CD4-positive, alpha-beta T cell (primary cell): ENCODE measurements at regions of chr3 and their contacts with region 1.

Region 1: GRCh38 chr3:152444029-152444641 is 175.4 kb downstream of the MBNL1 start:
- DNase-seq: peak in 3 of 14 experiments; percentile 62 to 68 (median 66)
- ATAC-seq: peak; percentile 57
- H3K4me3 ChIP-seq: no peak overlapping the region
- H3K4me3 Mint-ChIP-seq: peak overlapping the region; percentile 12
- H3K27ac ChIP-seq: peak overlapping the region in 1 of 2 donors; percentile 41
- H3K27ac Mint-ChIP-seq: peak overlapping the region; percentile 73
- H3K4me1 ChIP-seq: peaks cover 13% of the 10 kb centered on the region
- H3K4me1 Mint-ChIP-seq: peaks cover 79% of the 10 kb centered on the region
- H3K27me3 ChIP-seq: no peaks in the 10 kb centered on the region
- H3K27me3 Mint-ChIP-seq: no peaks in the 10 kb centered on the region
- CTCF ChIP-seq: peak; percentile 70

Region 2: GRCh38 chr3:152026033-152026556 is 418.0 kb before region 1 on chr3:
- CTCF ChIA-PET with region 1: interaction called, 4 read pairs
- POLR2A ChIA-PET with region 1: no interaction called
- intact Hi-C with region 1: loop called in 1 of 2 experiments (anchors 5 kb)
- DNase-seq: peak in 3 of 14 experiments; percentile 13 to 23 (median 22)
- ATAC-seq: no peak
- H3K4me3 ChIP-seq: no peak overlapping the region
- H3K4me3 Mint-ChIP-seq: no peak overlapping the region
- H3K27ac ChIP-seq: no peak overlapping the region
- H3K27ac Mint-ChIP-seq: no peak overlapping the region
- H3K4me1 ChIP-seq: no peaks in the 10 kb centered on the region
- H3K4me1 Mint-ChIP-seq: no peaks in the 10 kb centered on the region
- H3K27me3 ChIP-seq: no peaks in the 10 kb centered on the region
- H3K27me3 Mint-ChIP-seq: no peaks in the 10 kb centered on the region
- CTCF ChIP-seq: no peak

Region 3: GRCh38 chr3:152071924-152072323 is 372.2 kb before region 1 on chr3:
- CTCF ChIA-PET with region 1: interaction called, 3 read pairs
- POLR2A ChIA-PET with region 1: interaction called, 3 read pairs
- intact Hi-C with region 1: loop called in 1 of 2 experiments (anchors 1 kb)
- DNase-seq: peak in 4 of 14 experiments; percentile 2 to 65 (median 56)
- ATAC-seq: peak; percentile 86
- H3K4me3 ChIP-seq: no peak overlapping the region
- H3K4me3 Mint-ChIP-seq: no peak overlapping the region
- H3K27ac ChIP-seq: no peak overlapping the region
- H3K27ac Mint-ChIP-seq: no peak overlapping the region
- H3K4me1 ChIP-seq: no peaks in the 10 kb centered on the region
- H3K4me1 Mint-ChIP-seq: peaks cover 5% of the 10 kb centered on the region
- H3K27me3 ChIP-seq: no peaks in the 10 kb centered on the region
- H3K27me3 Mint-ChIP-seq: no peaks in the 10 kb centered on the region
- CTCF ChIP-seq: peak; percentile 45

Region 4: DNA sequence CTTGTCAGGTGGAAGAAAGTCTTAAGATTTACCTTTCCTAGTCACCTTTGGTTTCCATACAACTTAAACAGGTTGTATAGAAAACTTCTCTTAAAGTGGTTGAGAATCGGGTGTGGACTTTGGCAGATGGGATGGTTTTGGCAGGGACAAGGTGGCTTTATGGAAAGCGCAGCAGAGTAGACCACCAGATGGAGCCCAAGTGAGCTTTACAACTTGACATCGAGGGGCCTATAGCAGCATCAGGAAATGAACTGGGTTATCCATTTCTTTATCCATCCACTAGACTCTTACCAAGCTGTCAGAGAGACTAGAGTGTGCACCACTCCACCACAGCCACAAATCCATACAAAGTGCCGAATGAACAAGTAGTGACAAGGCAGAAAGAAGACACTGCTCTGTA is 260.7 kb before region 1 on chr3:
- CTCF ChIA-PET with region 1: interaction called, 17 read pairs
- POLR2A ChIA-PET with region 1: interaction called, 9 read pairs
- intact Hi-C with region 1: loop called (anchors 1 to 2 kb)
- DNase-seq: peak in 13 of 14 experiments; percentile 31 to 80 (median 39)
- ATAC-seq: peak; percentile 91
- H3K4me3 ChIP-seq: no peak overlapping the region
- H3K4me3 Mint-ChIP-seq: peak overlapping the region; percentile 45
- H3K27ac ChIP-seq: no peak overlapping the region
- H3K27ac Mint-ChIP-seq: peak overlapping the region; percentile 6
- H3K4me1 ChIP-seq: peaks cover 11% of the 10 kb centered on the region
- H3K4me1 Mint-ChIP-seq: peaks cover 63% of the 10 kb centered on the region
- H3K27me3 ChIP-seq: no peaks in the 10 kb centered on the region
- H3K27me3 Mint-ChIP-seq: no peaks in the 10 kb centered on the region
- CTCF ChIP-seq: peak; percentile 86

Region 5: DNA sequence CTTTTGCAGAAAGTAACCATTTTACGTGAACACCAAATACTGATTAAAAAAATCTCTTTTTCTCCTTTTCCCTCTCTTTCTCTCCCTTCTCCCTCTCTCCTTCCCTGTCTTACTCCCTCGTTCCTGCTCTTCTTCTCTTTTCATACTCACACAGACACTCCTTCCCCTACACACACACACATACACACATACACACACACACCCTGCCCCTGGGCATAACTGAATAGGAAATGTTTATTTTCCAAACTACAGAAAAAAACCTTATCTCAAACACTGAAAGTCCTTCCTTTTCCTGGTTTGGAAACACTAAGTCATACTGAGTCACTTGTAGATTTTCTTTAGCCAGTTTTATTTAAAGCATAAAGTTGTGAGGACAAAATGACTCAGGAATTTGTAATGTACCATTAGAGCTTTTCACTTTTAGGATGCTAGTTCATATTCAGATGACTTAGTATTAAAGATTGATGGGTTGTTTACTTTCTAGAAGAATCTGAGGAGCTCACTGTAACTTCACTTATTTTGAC is 113.1 kb before region 1 on chr3:
- CTCF ChIA-PET with region 1: interaction called, 8 read pairs
- POLR2A ChIA-PET with region 1: interaction called, 3 read pairs
- intact Hi-C with region 1: loop called in 1 of 2 experiments (anchors 5 kb)
- DNase-seq: no peak
- ATAC-seq: no peak
- H3K4me3 ChIP-seq: no peak overlapping the region
- H3K4me3 Mint-ChIP-seq: peak overlapping the region; percentile 40
- H3K27ac ChIP-seq: peak overlapping the region; percentile 0 to 12
- H3K27ac Mint-ChIP-seq: peak overlapping the region; percentile 47
- H3K4me1 ChIP-seq: peaks cover 36% of the 10 kb centered on the region
- H3K4me1 Mint-ChIP-seq: peaks cover 92% of the 10 kb centered on the region
- H3K27me3 ChIP-seq: no peaks in the 10 kb centered on the region
- H3K27me3 Mint-ChIP-seq: no peaks in the 10 kb centered on the region
- CTCF ChIP-seq: no peak

Region 6: DNA sequence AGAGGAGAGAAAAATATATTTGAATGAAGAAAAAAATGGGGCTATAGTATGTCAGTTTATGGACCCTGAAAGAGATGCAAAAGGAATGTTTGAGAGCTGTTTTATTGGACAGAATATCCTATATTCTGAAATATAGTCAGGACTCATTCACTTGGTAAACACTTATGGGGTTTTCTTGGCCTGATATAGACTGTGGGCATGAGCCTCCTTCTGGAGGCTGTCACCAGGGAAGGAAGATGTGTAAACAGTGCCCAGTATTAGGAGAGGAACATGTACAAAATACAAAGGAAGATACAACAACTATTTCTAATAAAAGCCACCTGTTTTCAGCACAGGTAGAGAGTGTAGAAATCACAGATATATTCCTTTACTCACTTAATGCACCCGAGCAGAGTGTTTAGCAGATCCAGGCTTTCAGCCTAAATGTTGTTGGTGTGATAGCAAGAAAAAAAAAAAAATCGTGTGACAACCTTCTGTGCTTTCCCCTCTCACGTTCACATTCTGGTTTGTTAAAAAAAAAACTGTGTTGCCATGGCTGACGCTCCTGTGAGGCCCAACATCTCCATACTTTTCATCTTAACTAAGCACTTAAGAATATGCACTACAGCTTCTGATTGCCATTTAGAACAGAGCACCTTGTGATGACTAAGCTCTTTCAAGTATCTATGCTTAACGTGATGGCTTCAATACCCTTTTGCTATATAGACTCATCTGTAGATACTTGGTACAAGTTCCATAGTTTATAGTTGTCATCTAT is 41.3 kb before region 1 on chr3:
- CTCF ChIA-PET with region 1: interaction called, 5 read pairs
- POLR2A ChIA-PET with region 1: no interaction called
- intact Hi-C with region 1: loop called in 1 of 2 experiments (anchors 5 kb)
- DNase-seq: peak in 5 of 14 experiments; percentile 11 to 79 (median 22)
- ATAC-seq: peak; percentile 86
- H3K4me3 ChIP-seq: no peak overlapping the region
- H3K4me3 Mint-ChIP-seq: peak overlapping the region; percentile 55
- H3K27ac ChIP-seq: peak overlapping the region; percentile 51 to 56
- H3K27ac Mint-ChIP-seq: peak overlapping the region; percentile 91
- H3K4me1 ChIP-seq: peaks cover 27% of the 10 kb centered on the region
- H3K4me1 Mint-ChIP-seq: peaks cover 96% of the 10 kb centered on the region
- H3K27me3 ChIP-seq: no peaks in the 10 kb centered on the region
- H3K27me3 Mint-ChIP-seq: no peaks in the 10 kb centered on the region
- CTCF ChIP-seq: no peak